ENCODE measurements at regions of chr10 and their contacts with region 1.

Region 1: GRCh38 chr10:62610649-62611229 is 193.8 kb upstream of the ADO start:
- DNase-seq: peak; percentile 46

Region 2: GRCh38 chr10:61923213-61923949 is 687.4 kb before region 1 on chr10:
- in situ Hi-C with region 1: no loop called
- DNase-seq: no peak

Region 3: GRCh38 chr10:62816331-62817120 is 205.8 kb after region 1 on chr10 and contains the start of gene EGR2:
- in situ Hi-C with region 1: loop called (anchors 25 kb)
- DNase-seq: peak; percentile 97
- total RNA-seq, gene EGR2: 0.03 TPM in 1 of 2 replicates, not detected in the other

Measured in Caki2 (cell line).